CD4-positive, alpha-beta memory T cell (primary cell): ENCODE measurements at regions of chr1 and their contacts with region 1.

Region 1: DNA sequence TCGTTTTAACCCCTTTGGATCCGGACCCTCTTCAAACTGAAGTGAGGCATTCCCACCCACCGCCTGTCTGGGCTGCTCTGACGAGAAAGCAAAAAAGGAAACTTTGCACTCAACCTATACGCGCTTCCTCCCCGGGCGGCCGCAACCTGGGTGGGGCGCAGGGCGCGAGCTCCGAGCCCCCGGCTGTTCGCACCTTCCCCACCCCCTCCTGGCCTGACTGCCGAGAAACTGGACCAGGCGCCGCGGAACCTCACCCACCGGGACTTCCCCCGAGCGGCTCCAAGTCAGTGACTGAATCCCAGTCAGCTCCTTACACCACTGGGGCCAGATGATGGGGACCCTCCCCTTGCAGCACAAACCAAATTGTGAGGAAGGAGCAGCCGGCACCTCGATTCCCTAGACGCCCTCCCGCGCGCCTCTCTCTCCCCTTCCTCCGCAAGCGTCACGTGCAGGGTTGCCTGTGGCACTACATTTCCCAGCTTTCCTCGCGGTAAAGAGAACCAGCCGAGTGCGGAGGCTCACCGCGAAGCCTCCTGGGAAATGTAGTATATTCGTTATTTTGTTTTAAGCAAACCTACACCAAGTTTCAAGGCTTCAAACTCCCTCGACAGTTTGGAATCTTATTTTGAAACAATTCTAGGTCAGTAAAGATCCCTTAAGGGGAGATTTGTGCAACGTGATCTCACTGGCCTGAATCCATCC is at the start of gene RAB29:
- DNase-seq: peak; percentile 88 to 94 (median 90)
- H3K4me3 ChIP-seq: peak within 1 kb of the TSS; percentile 59 to 77
- H3K4me3 Mint-ChIP-seq: peak within 1 kb of the TSS; percentile 91 to 100 (median 92)
- H3K27ac ChIP-seq: peak within 1 kb of the TSS; percentile 87
- H3K27ac Mint-ChIP-seq: peak within 1 kb of the TSS; percentile 92 to 98 (median 97)
- H3K4me1 ChIP-seq: peaks cover 43% of the 10 kb centered on the region
- H3K4me1 Mint-ChIP-seq: peaks cover 35 to 69% (median 48%) of the 10 kb centered on the region in 4 donors
- H3K27me3 ChIP-seq: no peaks in the 10 kb centered on the region
- H3K27me3 Mint-ChIP-seq: no peaks in the 10 kb centered on the region
- total RNA-seq, gene RAB29: 59.7 to 62.0 TPM

Region 2: DNA sequence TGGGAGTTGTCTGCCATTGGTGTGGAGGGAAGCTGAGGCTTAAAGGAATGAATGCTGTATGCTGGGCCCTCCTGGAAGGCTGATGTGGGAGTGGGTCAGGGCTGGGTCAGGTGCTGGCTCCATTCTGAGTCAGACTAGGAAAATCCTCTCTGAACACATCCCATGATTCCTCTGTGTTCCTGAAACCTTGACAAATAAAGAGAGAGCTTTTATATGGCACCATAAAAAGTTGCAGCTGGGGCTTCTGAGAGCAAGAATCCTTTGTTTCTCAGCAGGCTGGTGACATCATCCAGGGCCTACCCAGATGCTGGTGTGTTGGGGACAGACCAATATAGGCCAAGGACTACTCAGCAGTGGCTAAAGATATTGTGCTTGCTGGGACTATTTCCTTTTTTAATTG is 932.3 kb before region 1 on chr1:
- CTCF ChIA-PET with region 1: no interaction called
- POLR2A ChIA-PET with region 1: no interaction called
- intact Hi-C with region 1: no loop called
- DNase-seq: no peak
- H3K4me3 ChIP-seq: no peak overlapping the region
- H3K4me3 Mint-ChIP-seq: no peak overlapping the region
- H3K27ac ChIP-seq: no peak overlapping the region
- H3K27ac Mint-ChIP-seq: no peak overlapping the region
- H3K4me1 ChIP-seq: no peaks in the 10 kb centered on the region
- H3K4me1 Mint-ChIP-seq: no peaks in the 10 kb centered on the region
- H3K27me3 ChIP-seq: no peaks in the 10 kb centered on the region
- H3K27me3 Mint-ChIP-seq: peaks cover 4 to 15% of the 10 kb centered on the region in 2 donors

Region 3: GRCh38 chr1:205711104-205712020 is 63.8 kb before region 1 on chr1:
- CTCF ChIA-PET with region 1: interaction called, 60 read pairs
- POLR2A ChIA-PET with region 1: interaction called, 8 read pairs
- intact Hi-C with region 1: loop called (anchors 2 kb)
- DNase-seq: peak; percentile 54 to 67 (median 62)
- H3K4me3 ChIP-seq: no peak overlapping the region
- H3K4me3 Mint-ChIP-seq: no peak overlapping the region
- H3K27ac ChIP-seq: no peak overlapping the region
- H3K27ac Mint-ChIP-seq: peak overlapping the region in 4 of 7 donors; percentile 25 to 68 (median 56)
- H3K4me1 ChIP-seq: peaks cover 3% of the 10 kb centered on the region
- H3K4me1 Mint-ChIP-seq: peaks cover 5 to 14% (median 11%) of the 10 kb centered on the region in 4 donors
- H3K27me3 ChIP-seq: no peaks in the 10 kb centered on the region
- H3K27me3 Mint-ChIP-seq: no peaks in the 10 kb centered on the region

Region 4: GRCh38 chr1:205739348-205740160 is 35.6 kb before region 1 on chr1:
- CTCF ChIA-PET with region 1: interaction called, 3 read pairs
- POLR2A ChIA-PET with region 1: interaction called, 3 read pairs
- intact Hi-C with region 1: loop called (anchors 5 kb)
- DNase-seq: no peak
- H3K4me3 ChIP-seq: no peak overlapping the region
- H3K4me3 Mint-ChIP-seq: peak overlapping the region in 1 of 8 donors; percentile 17
- H3K27ac ChIP-seq: no peak overlapping the region
- H3K27ac Mint-ChIP-seq: peak overlapping the region in 2 of 7 donors; percentile 30 to 57
- H3K4me1 ChIP-seq: peaks cover 24% of the 10 kb centered on the region
- H3K4me1 Mint-ChIP-seq: peaks cover 34 to 52% (median 42%) of the 10 kb centered on the region in 4 donors
- H3K27me3 ChIP-seq: no peaks in the 10 kb centered on the region
- H3K27me3 Mint-ChIP-seq: no peaks in the 10 kb centered on the region

Region 5: GRCh38 chr1:205750138-205751035 is 24.8 kb before region 1 on chr1 and contains the start of gene NUCKS1:
- CTCF ChIA-PET with region 1: interaction called, 11 read pairs
- POLR2A ChIA-PET with region 1: interaction called, 129 read pairs
- intact Hi-C with region 1: loop called (anchors 1 kb)
- DNase-seq: peak; percentile 94 to 99 (median 98)
- H3K4me3 ChIP-seq: peak within 1 kb of the TSS; percentile 83 to 91
- H3K4me3 Mint-ChIP-seq: peak within 1 kb of the TSS; percentile 95 to 99 (median 98)
- H3K27ac ChIP-seq: peak within 1 kb of the TSS; percentile 87
- H3K27ac Mint-ChIP-seq: peak within 1 kb of the TSS; percentile 95 to 100 (median 98)
- H3K4me1 ChIP-seq: peaks cover 34% of the 10 kb centered on the region
- H3K4me1 Mint-ChIP-seq: peaks cover 25 to 57% (median 39%) of the 10 kb centered on the region in 4 donors
- H3K27me3 ChIP-seq: no peaks in the 10 kb centered on the region
- H3K27me3 Mint-ChIP-seq: peaks cover 0 to 2% of the 10 kb centered on the region in 2 donors
- total RNA-seq, gene NUCKS1: 111 to 117 TPM

Region 6: GRCh38 chr1:205760606-205761005 is 14.6 kb before region 1 on chr1:
- CTCF ChIA-PET with region 1: interaction called, 5 read pairs
- POLR2A ChIA-PET with region 1: interaction called, 14 read pairs
- intact Hi-C with region 1: no loop called
- DNase-seq: no peak
- H3K4me3 ChIP-seq: no peak overlapping the region
- H3K4me3 Mint-ChIP-seq: no peak overlapping the region
- H3K27ac ChIP-seq: no peak overlapping the region
- H3K27ac Mint-ChIP-seq: peak overlapping the region in 1 of 7 donors; percentile 66
- H3K4me1 ChIP-seq: no peaks in the 10 kb centered on the region
- H3K4me1 Mint-ChIP-seq: peaks cover 0 to 4% (median 0%) of the 10 kb centered on the region in 4 donors
- H3K27me3 ChIP-seq: no peaks in the 10 kb centered on the region
- H3K27me3 Mint-ChIP-seq: no peaks in the 10 kb centered on the region

Region 7: GRCh38 chr1:205805082-205805712 is 30.0 kb after region 1 on chr1:
- CTCF ChIA-PET with region 1: interaction called, 4 read pairs
- POLR2A ChIA-PET with region 1: interaction called, 10 read pairs
- intact Hi-C with region 1: no loop called
- DNase-seq: peak in 1 of 5 donors; percentile 15
- H3K4me3 ChIP-seq: no peak overlapping the region
- H3K4me3 Mint-ChIP-seq: peak overlapping the region in 7 of 8 donors; percentile 56 to 81 (median 76)
- H3K27ac ChIP-seq: peak overlapping the region; percentile 27
- H3K27ac Mint-ChIP-seq: peak overlapping the region; percentile 28 to 88 (median 85)
- H3K4me1 ChIP-seq: peaks cover 55% of the 10 kb centered on the region
- H3K4me1 Mint-ChIP-seq: peaks cover 45 to 81% (median 61%) of the 10 kb centered on the region in 4 donors
- H3K27me3 ChIP-seq: no peaks in the 10 kb centered on the region
- H3K27me3 Mint-ChIP-seq: no peaks in the 10 kb centered on the region

Region 8: DNA sequence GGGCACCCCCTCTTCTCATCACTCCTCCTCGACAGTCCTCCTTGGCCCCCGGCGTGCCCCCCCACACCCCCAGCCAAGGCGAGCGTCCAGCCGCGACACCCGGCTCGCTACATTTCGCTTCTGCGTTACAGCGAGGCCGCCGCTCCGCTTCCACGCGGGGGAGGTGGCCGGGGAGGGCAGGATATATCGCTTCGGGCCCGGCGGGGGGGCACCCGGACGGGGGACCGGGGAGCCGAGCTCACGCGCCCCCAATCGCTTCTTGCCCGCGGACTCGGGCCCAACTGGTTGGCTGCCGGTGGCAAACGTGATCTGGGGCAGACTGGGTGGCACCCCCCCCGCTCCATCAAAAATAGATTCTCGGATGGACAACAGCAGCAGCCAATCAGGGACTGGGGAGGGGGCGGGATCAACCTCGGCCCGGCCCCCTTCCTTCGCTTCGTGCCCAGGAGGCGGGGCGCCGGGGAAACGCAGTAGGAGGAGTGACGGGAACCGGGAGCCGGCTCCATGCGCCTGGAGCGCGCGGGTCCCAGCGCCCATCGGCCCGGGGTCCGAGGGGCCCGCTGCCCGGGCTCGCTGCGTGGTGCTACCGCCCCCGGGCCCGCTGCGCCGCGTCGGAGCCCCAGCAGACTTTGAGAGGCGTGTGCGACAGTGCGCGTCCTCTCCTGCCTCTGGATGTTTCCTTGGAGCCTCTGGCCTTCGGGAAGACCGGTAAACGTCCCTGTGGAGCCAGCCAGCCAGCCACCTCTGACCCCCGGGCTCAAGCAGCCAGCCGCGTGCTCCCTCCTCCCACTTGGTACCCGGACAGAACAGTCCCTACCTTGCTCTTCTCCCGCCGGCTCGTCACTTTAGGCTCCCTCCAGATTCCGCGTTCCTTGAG is 38.0 kb after region 1 on chr1 and contains the start of gene SLC41A1:
- CTCF ChIA-PET with region 1: interaction called, 3 read pairs
- POLR2A ChIA-PET with region 1: interaction called, 10 read pairs
- intact Hi-C with region 1: loop called (anchors 1 kb)
- DNase-seq: peak; percentile 90 to 96 (median 93)
- H3K4me3 ChIP-seq: peak within 1 kb of the TSS; percentile 71 to 88
- H3K4me3 Mint-ChIP-seq: peak within 1 kb of the TSS; percentile 91 to 96 (median 94)
- H3K27ac ChIP-seq: peak within 1 kb of the TSS; percentile 69
- H3K27ac Mint-ChIP-seq: peak within 1 kb of the TSS; percentile 82 to 95 (median 93)
- H3K4me1 ChIP-seq: peaks cover 54% of the 10 kb centered on the region
- H3K4me1 Mint-ChIP-seq: peaks cover 37 to 62% (median 49%) of the 10 kb centered on the region in 4 donors
- H3K27me3 ChIP-seq: no peaks in the 10 kb centered on the region
- H3K27me3 Mint-ChIP-seq: no peaks in the 10 kb centered on the region
- total RNA-seq, gene SLC41A1: 26.1 to 26.3 TPM

Region 9: DNA sequence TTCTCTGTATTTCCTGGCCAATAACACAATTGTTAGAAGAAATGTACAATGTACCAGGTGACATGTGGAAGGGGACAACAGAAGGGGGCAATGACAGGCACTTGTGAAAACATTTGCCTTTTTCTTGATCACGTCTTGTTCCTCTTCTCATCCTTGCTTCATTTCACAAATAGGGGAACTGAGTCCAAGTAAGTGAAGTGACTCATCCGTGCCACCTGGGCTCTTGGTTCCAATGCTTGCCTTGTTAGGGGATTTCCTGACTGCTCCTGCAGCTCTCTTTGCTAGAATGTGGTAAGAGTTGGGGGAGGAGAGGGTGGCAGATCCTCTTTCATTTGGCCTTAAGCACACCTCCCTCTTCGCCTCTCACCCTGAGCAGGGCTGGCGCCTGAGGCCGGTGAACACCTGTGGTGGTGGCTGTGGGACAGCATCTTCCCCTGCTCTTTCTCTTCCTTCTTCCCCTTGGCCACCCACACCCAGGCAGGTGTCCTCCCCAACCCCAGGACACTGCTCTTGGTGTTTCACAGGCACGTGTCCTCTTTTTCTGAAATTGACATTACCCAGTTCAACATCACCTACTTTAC is 275.6 kb after region 1 on chr1:
- CTCF ChIA-PET with region 1: no interaction called
- POLR2A ChIA-PET with region 1: no interaction called
- intact Hi-C with region 1: no loop called
- DNase-seq: peak; percentile 8 to 76 (median 42)
- H3K4me3 ChIP-seq: no peak overlapping the region
- H3K4me3 Mint-ChIP-seq: peak overlapping the region in 6 of 8 donors; percentile 27 to 84 (median 62)
- H3K27ac ChIP-seq: peak overlapping the region; percentile 10
- H3K27ac Mint-ChIP-seq: peak overlapping the region; percentile 68 to 92 (median 81)
- H3K4me1 ChIP-seq: peaks cover 26% of the 10 kb centered on the region
- H3K4me1 Mint-ChIP-seq: peaks cover 10 to 37% (median 20%) of the 10 kb centered on the region in 4 donors
- H3K27me3 ChIP-seq: no peaks in the 10 kb centered on the region
- H3K27me3 Mint-ChIP-seq: no peaks in the 10 kb centered on the region

Region 10: GRCh38 chr1:206784471-206784903 is 1009.3 kb after region 1 on chr1:
- CTCF ChIA-PET with region 1: no interaction called
- POLR2A ChIA-PET with region 1: no interaction called
- intact Hi-C with region 1: no loop called
- DNase-seq: peak; percentile 60 to 83 (median 63)
- H3K4me3 ChIP-seq: peak overlapping the region in 1 of 2 donors; percentile 16
- H3K4me3 Mint-ChIP-seq: peak overlapping the region; percentile 55 to 84 (median 70)
- H3K27ac ChIP-seq: peak overlapping the region; percentile 46
- H3K27ac Mint-ChIP-seq: peak overlapping the region; percentile 83 to 96 (median 93)
- H3K4me1 ChIP-seq: peaks cover 37% of the 10 kb centered on the region
- H3K4me1 Mint-ChIP-seq: peaks cover 37 to 60% (median 49%) of the 10 kb centered on the region in 4 donors
- H3K27me3 ChIP-seq: no peaks in the 10 kb centered on the region
- H3K27me3 Mint-ChIP-seq: no peaks in the 10 kb centered on the region